ENCODE measurements at regions of chr19 and their contacts with region 1.

Region 1: DNA sequence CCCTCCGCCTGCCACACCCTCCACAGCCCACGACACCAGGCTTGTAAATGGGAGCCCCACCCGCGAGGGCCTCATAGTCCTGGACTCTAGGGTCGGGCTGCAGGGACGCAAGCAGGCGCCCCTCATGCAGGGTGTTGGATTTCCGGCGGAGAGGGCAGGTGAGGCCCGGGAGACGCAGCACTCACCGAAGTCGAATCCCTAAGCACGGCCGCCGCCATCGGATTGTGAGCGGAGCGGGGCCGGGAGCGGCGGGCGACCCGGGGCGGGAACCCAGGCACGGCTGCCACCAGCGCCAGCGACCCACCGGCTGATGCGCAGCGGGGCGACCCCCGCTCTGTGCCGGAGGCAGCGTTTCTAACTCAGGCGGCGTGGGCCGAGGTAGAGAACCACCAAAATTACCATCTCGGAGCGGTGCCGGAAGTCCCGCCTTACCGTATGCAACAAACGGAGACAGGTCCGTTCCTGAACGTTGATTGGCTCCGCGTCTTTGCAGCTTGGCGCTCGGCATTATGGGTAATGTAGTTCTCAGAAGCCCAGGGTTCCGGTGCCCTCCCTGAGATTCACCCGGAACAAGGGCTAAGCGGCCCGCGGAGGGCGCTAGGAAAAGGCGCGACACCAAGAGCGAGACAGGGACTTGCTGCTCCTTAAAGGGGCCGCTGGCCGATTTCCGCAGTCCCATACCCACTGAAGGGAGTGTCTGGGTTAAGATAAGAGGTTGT is at the start of gene ZNF416:
- DNase-seq: peak; percentile 88 to 99 (median 94)
- ATAC-seq: peak; percentile 96
- H3K4me3 ChIP-seq: peak within 1 kb of the TSS; percentile 81
- H3K4me3 Mint-ChIP-seq: peak within 1 kb of the TSS; percentile 94
- H3K27ac ChIP-seq: peak within 1 kb of the TSS; percentile 25 to 60
- H3K27ac Mint-ChIP-seq: peak within 1 kb of the TSS; percentile 79
- H3K4me1 ChIP-seq: peaks cover 29% of the 10 kb centered on the region
- H3K4me1 Mint-ChIP-seq: peaks cover 28% of the 10 kb centered on the region
- H3K27me3 ChIP-seq: no peaks in the 10 kb centered on the region
- H3K27me3 Mint-ChIP-seq: no peaks in the 10 kb centered on the region
- CTCF ChIP-seq: no peak
- total RNA-seq, gene ZNF416: 5.2 to 5.7 TPM

Region 2: GRCh38 chr19:57389730-57390598 is 188.7 kb before region 1 on chr19 and contains the start of gene ZNF548:
- CTCF ChIA-PET with region 1: interaction called, 3 read pairs
- POLR2A ChIA-PET with region 1: interaction called, 5 read pairs
- intact Hi-C with region 1: loop called in 1 of 2 experiments (anchors 1 kb)
- DNase-seq: peak; percentile 87 to 99 (median 95)
- ATAC-seq: peak; percentile 96
- H3K4me3 ChIP-seq: peak within 1 kb of the TSS; percentile 86
- H3K4me3 Mint-ChIP-seq: peak within 1 kb of the TSS; percentile 98
- H3K27ac ChIP-seq: peak within 1 kb of the TSS; percentile 86 to 95
- H3K27ac Mint-ChIP-seq: peak within 1 kb of the TSS; percentile 95
- H3K4me1 ChIP-seq: peaks cover 18% of the 10 kb centered on the region
- H3K4me1 Mint-ChIP-seq: peaks cover 33% of the 10 kb centered on the region
- H3K27me3 ChIP-seq: no peaks in the 10 kb centered on the region
- H3K27me3 Mint-ChIP-seq: no peaks in the 10 kb centered on the region
- CTCF ChIP-seq: no peak
- total RNA-seq, gene ZNF548: 68.3 to 70.4 TPM

Region 3: DNA sequence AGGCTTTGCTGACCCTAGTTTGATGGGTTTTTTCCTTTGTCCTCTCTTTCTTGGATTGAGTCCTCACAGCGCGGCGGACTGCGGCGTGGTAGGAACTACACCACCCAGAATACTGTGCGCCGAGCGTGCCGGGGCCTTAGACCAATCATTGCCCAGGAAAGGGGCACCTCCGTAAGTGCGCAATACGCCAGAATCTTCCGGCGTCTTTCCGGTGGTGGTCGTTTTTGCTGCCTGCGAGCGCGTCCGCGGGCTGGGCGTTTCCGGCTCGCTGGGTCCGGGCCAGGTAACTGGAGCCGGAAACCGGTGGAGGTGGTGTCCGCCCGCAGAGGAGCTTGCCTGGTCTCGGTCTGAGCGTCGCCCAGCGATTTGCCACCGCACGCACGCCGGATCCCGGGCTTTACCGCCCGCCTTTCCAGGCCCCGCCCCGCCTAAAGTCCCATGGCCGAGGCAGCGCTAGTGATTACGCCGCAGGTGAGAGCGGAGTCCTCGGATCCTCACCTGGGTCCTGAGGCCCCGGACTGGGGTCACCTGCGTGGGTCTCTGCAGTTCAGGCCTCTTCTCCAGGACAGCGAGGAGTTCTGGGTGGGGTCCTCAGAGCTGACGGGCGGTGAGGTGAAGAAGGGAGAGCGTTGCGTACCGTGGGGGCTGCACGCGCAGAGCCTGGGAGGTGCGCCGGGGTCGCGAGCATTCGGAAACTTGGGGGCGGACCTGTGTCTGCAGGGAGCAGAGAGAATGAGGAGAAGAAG is 51.3 kb before region 1 on chr19 and contains the start of gene ZNF549:
- CTCF ChIA-PET with region 1: no interaction called
- POLR2A ChIA-PET with region 1: interaction called, 3 read pairs
- intact Hi-C with region 1: loop called (anchors 2 to 5 kb)
- DNase-seq: peak; percentile 76 to 96 (median 83)
- ATAC-seq: peak; percentile 97
- H3K4me3 ChIP-seq: peak within 1 kb of the TSS; percentile 96
- H3K4me3 Mint-ChIP-seq: peak within 1 kb of the TSS; percentile 97
- H3K27ac ChIP-seq: peak within 1 kb of the TSS; percentile 77 to 81
- H3K27ac Mint-ChIP-seq: peak within 1 kb of the TSS; percentile 94
- H3K4me1 ChIP-seq: peaks cover 18% of the 10 kb centered on the region
- H3K4me1 Mint-ChIP-seq: peaks cover 23% of the 10 kb centered on the region
- H3K27me3 ChIP-seq: no peaks in the 10 kb centered on the region
- H3K27me3 Mint-ChIP-seq: no peaks in the 10 kb centered on the region
- CTCF ChIP-seq: no peak
- total RNA-seq, gene ZNF549: 10.1 to 11.1 TPM

Region 4: DNA sequence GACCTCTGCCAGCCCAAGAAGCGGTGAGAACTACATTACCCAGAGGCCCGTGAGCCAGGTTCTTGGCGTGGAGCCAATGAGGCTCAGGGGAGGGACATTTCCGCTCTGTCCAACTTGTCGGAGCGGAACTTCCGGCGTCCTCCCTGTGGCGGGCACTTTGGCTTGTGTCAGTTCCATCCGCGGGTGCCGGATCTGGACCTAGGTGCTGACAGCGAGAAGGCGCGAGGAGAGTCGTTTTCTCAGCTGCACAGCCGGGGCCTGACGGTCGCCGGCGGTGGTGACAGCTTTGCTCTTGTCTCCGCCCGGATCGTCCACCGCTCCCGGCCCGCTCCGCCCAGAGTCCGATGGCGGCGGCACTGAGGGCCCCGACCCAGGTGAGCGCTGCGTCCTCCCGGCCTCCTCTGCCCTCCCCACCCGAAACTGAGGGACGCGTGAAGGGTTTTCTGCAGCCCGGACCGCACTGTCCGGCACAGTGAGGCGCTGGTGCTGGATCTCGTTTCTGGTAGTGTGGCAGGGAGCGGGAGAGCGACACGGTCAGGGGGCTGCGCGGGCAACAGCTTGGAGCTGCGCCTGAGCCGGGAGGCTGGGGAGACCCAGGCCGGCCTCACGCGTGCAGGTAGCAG is 21.2 kb after region 1 on chr19 and contains the start of gene ZNF530:
- CTCF ChIA-PET with region 1: interaction called, 3 read pairs
- POLR2A ChIA-PET with region 1: interaction called, 5 read pairs
- intact Hi-C with region 1: loop called in 1 of 2 experiments (anchors 1 kb)
- DNase-seq: peak; percentile 67 to 92 (median 83)
- ATAC-seq: peak; percentile 91
- H3K4me3 ChIP-seq: peak within 1 kb of the TSS; percentile 77
- H3K4me3 Mint-ChIP-seq: peak within 1 kb of the TSS; percentile 91
- H3K27ac ChIP-seq: peak within 1 kb of the TSS in 1 of 2 donors; percentile 29
- H3K27ac Mint-ChIP-seq: peak within 1 kb of the TSS; percentile 52
- H3K4me1 ChIP-seq: peaks cover 15% of the 10 kb centered on the region
- H3K4me1 Mint-ChIP-seq: peaks cover 27% of the 10 kb centered on the region
- H3K27me3 ChIP-seq: no peaks in the 10 kb centered on the region
- H3K27me3 Mint-ChIP-seq: no peaks in the 10 kb centered on the region
- CTCF ChIP-seq: no peak
- total RNA-seq, gene ZNF530: 2.7 to 3.4 TPM

Region 5: DNA sequence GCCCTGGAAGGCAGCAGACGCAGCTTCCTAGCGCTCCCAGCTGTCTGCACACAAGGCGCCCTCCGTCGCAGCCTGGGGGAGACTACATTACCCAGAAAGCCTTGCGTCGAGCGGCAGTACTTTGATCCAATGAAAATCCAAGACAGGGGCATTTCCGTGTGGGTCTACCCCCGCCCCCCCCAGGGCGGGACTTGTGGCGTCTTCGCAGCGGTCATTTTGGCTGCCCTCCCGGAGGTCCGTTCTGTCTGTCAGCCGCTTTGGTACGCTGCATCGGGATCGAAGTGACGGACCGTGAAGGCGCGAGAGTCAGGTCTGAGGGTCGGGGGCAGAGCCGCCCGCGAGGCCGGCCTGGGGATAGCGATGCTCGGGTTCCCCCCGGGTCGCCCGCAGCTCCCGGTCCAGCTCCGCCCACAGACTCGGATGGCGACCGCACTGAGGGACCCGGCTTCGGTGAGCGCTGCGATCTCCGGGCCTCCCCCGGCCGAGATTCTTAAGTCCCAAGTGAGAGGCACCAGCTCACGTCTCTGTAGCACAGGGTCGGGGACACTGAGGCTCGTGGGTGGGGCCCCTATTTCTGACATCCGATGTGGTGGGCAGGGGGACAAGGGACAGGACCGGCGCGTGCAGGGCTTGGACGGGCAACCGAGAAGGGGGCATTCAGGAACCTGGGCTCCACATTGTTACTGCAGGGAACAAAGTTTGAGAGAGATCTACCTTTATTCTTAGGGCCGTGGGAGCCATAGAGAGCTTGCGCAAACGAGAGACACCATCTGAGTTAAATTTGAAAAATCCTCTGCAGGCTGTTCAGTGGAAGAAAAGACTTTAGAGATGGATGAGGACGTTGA is 54.6 kb after region 1 on chr19 and contains the start of gene ZNF211:
- CTCF ChIA-PET with region 1: interaction called, 3 read pairs
- POLR2A ChIA-PET with region 1: interaction called, 4 read pairs
- intact Hi-C with region 1: loop called (anchors 2 to 5 kb)
- DNase-seq: peak; percentile 73 to 95 (median 84)
- ATAC-seq: peak; percentile 99
- H3K4me3 ChIP-seq: peak within 1 kb of the TSS; percentile 87
- H3K4me3 Mint-ChIP-seq: peak within 1 kb of the TSS; percentile 98
- H3K27ac ChIP-seq: peak within 1 kb of the TSS; percentile 69 to 72
- H3K27ac Mint-ChIP-seq: peak within 1 kb of the TSS; percentile 76
- H3K4me1 ChIP-seq: peaks cover 19% of the 10 kb centered on the region
- H3K4me1 Mint-ChIP-seq: peaks cover 31% of the 10 kb centered on the region
- H3K27me3 ChIP-seq: no peaks in the 10 kb centered on the region
- H3K27me3 Mint-ChIP-seq: no peaks in the 10 kb centered on the region
- CTCF ChIP-seq: no peak
- total RNA-seq, gene ZNF211: 29.3 to 30.5 TPM

Measured in CD4-positive, alpha-beta T cell (primary cell).